ENCODE measurements at regions of chr4 and their contacts with region 1.

Region 1: GRCh38 chr4:38782452-38783108 is at the start of gene TLR10:
- DNase-seq: peak; percentile 67
- CTCF ChIP-seq: peak; percentile 55

Region 2: GRCh38 chr4:38768968-38769394 is 13.6 kb before region 1 on chr4:
- CTCF ChIA-PET with region 1: interaction called, 248 read pairs
- POLR2A ChIA-PET with region 1: no interaction called
- DNase-seq: no peak
- CTCF ChIP-seq: no peak

Region 3: GRCh38 chr4:39394702-39395101 is 612.1 kb after region 1 on chr4:
- CTCF ChIA-PET with region 1: no interaction called
- POLR2A ChIA-PET with region 1: no interaction called
- DNase-seq: no peak
- CTCF ChIP-seq: no peak